ENCODE measurements at regions of chr7 and their contacts with region 1.

Region 1: GRCh38 chr7:95916573-95917297 is 144.4 kb downstream of the DYNC1I1 start:
- DNase-seq: peak; percentile 77 to 93 (median 86)
- H3K4me3 ChIP-seq: peak overlapping the region in 24 of 59 donors; percentile 0 to 43 (median 26)
- H3K27ac ChIP-seq: peak overlapping the region in 1 of 59 donors; percentile 28
- H3K27me3 ChIP-seq: no peaks in the 10 kb centered on the region
- CTCF ChIP-seq: peak; percentile 88 to 98 (median 96)

Region 2: GRCh38 chr7:95950698-95951097 is 34.0 kb after region 1 on chr7:
- intact Hi-C with region 1: no loop called
- DNase-seq: no peak
- H3K4me3 ChIP-seq: no peak overlapping the region
- H3K27ac ChIP-seq: no peak overlapping the region
- H3K27me3 ChIP-seq: no peaks in the 10 kb centered on the region
- CTCF ChIP-seq: no peak

Region 3: DNA sequence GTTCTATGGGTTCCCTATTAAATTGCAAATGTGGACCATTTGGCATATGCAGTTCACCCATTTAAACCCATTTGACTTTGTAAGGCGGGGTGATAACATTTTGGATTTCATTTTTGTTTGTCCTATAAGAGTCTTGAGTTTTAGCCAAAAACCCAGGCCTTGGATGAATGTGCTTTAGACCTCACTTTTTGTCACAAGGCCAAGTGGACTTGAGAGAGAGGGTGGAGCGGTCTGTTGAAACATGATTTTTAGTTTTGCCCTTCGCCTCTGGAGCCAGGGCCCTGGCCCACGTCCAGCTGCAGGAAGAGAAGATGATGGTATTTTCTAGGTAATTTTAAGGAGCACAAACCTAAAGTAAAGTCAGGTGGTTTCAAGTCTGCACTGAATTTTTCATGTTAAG is 145.1 kb after region 1 on chr7:
- intact Hi-C with region 1: loop called in 1 of 2 experiments (anchors 10 kb)
- DNase-seq: no peak
- H3K4me3 ChIP-seq: no peak overlapping the region
- H3K27ac ChIP-seq: no peak overlapping the region
- H3K27me3 ChIP-seq: no peaks in the 10 kb centered on the region
- CTCF ChIP-seq: no peak

Region 4: DNA sequence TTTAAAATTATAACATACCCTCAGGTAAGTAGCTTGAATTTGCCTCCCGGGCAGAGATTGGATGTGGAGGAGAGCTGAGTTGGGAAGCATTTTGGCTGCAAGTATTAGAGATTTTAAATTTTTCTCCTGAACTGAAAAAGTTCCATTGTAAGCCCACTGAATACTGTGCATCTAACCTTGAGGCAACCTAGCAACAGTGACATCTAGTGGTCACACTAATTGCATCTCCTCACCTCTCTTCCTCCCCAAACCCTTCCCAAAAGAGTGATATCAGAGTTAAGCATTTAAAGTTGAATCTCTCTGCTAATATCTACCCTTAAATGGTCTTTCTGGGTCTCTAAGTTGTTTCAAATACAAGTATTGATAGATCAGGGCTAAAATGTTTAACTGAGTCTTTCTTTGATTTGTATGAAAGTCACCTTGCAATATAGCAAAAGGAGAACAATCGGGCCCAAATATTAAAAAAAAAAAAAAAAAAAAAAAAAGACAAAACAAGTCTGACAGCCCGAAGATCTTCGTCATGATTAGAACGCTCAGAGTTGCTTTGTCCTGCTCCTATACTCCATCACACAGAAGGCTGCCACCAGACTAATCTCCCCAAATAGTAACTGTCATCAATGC is 1148.3 kb after region 1 on chr7:
- intact Hi-C with region 1: loop called in 1 of 2 experiments (anchors 2 kb)
- DNase-seq: peak in 1 of 10 donors; percentile 11
- H3K4me3 ChIP-seq: no peak overlapping the region
- H3K27ac ChIP-seq: no peak overlapping the region
- H3K27me3 ChIP-seq: no peaks in the 10 kb centered on the region
- CTCF ChIP-seq: peak; percentile 48 to 83 (median 70)

Measured in dorsolateral prefrontal cortex (tissue), 120 donors.